Naive thymus-derived CD4-positive, alpha-beta T cell (primary cell): ENCODE measurements at regions of chr1 and their contacts with region 1.

Region 1: DNA sequence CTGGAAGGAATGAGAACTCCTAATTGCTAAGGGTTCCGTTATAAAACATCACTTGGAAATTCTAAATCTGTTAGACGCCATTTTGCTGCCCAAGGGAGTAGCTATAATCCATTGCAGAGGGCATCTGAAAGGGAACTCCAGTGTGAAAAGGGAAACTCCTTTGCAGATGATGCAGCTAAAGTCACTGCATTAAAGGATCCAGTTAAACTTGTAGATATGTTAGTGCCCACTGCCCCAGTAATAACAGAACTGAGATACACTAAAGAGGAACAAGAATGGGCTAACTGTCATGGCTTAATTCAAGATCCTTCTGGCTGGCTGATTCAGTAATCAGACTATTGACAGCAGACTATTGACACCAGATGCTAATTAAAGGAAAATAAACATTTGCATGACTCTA is 81.8 kb upstream of the KIAA0040 start:
- DNase-seq: no peak
- ATAC-seq: no peak
- H3K4me3 ChIP-seq: no peak overlapping the region
- H3K4me3 Mint-ChIP-seq: no peak overlapping the region
- H3K27ac ChIP-seq: no peak overlapping the region
- H3K27ac Mint-ChIP-seq: no peak overlapping the region
- H3K4me1 ChIP-seq: no peaks in the 10 kb centered on the region
- H3K4me1 Mint-ChIP-seq: peaks cover 0 to 5% (median 0%) of the 10 kb centered on the region in 7 donors
- H3K27me3 ChIP-seq: no peaks in the 10 kb centered on the region
- H3K27me3 Mint-ChIP-seq: peaks cover 0 to 13% (median 4%) of the 10 kb centered on the region in 5 donors

Region 2: DNA sequence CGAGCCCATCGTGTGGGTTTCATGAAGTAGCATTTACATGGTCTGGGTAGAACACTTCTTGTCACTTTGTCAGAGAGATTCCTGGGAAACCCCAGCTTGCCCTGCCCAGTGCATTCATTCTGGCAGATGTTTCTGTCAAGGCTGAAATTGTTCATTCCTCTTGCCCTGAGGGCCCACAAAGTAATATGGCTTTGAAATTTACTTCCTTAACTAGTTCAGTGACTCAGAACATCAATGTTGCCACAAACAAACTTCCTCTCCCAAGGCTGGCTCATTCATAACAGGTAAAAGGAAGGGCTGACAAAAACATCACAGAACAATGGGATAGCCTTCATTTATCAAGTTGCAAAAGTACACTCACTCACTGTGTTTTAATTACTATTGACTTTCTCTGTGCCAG is 76.8 kb before region 1 on chr1:
- CTCF ChIA-PET with region 1: no interaction called
- POLR2A ChIA-PET with region 1: no interaction called
- intact Hi-C with region 1: no loop called
- DNase-seq: no peak
- ATAC-seq: peak; percentile 30
- H3K4me3 ChIP-seq: no peak overlapping the region
- H3K4me3 Mint-ChIP-seq: peak overlapping the region in 1 of 10 donors; percentile 32
- H3K27ac ChIP-seq: no peak overlapping the region
- H3K27ac Mint-ChIP-seq: peak overlapping the region in 4 of 9 donors; percentile 2 to 23 (median 8)
- H3K4me1 ChIP-seq: peaks cover 3 to 8% of the 10 kb centered on the region in 2 donors
- H3K4me1 Mint-ChIP-seq: peaks cover 11 to 47% (median 19%) of the 10 kb centered on the region in 7 donors
- H3K27me3 ChIP-seq: no peaks in the 10 kb centered on the region
- H3K27me3 Mint-ChIP-seq: peaks cover 0 to 7% (median 0%) of the 10 kb centered on the region in 5 donors

Region 3: GRCh38 chr1:175237389-175237788 is 37.0 kb before region 1 on chr1:
- CTCF ChIA-PET with region 1: no interaction called
- POLR2A ChIA-PET with region 1: no interaction called
- intact Hi-C with region 1: loop called in 1 of 2 experiments (anchors 5 kb)
- DNase-seq: no peak
- ATAC-seq: no peak
- H3K4me3 ChIP-seq: no peak overlapping the region
- H3K4me3 Mint-ChIP-seq: peak overlapping the region in 1 of 10 donors; percentile 53
- H3K27ac ChIP-seq: no peak overlapping the region
- H3K27ac Mint-ChIP-seq: peak overlapping the region in 1 of 9 donors; percentile 62
- H3K4me1 ChIP-seq: peaks cover 0 to 12% of the 10 kb centered on the region in 2 donors
- H3K4me1 Mint-ChIP-seq: peaks cover 13 to 35% (median 25%) of the 10 kb centered on the region in 7 donors
- H3K27me3 ChIP-seq: no peaks in the 10 kb centered on the region
- H3K27me3 Mint-ChIP-seq: peaks cover 0 to 4% (median 0%) of the 10 kb centered on the region in 5 donors